ENCODE measurements at regions of chr6 and their contacts with region 1.

Region 1: DNA sequence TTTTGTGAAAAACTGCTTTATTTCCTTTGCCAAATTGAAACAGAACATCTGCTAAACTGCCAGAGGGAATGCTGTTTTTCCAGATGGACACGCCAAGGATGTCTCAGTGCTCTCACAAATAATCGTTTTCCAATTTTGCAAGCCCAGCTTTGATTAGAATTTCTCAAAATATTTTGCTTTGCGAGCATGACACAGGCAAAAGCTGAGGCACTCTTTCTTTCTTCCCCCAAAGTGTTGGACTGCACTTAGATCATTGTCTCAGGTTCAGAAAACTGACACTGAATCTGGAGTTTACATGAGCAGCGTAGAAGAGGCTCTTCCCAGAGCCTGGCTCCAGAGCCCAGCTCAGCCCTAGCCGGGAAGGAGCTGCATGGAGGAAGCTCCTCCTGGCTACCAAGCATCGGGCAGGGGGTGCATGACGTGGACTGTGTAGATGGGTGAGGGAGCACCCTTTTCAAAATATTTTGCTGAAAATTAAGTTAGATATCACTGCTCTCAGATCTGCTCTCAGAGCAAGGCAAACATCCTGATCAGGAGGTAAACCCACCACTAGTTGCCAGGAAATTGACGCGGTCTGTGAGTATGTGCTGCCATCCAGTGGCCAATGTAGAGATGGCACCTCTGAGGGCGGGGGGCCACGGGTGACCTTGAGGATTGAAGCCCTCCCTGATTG is 107.5 kb downstream of the SLC22A3 start:
- DNase-seq: peak; percentile 58 to 72 (median 68)
- H3K4me3 ChIP-seq: no peak overlapping the region
- H3K4me3 Mint-ChIP-seq: no peak overlapping the region
- H3K27ac ChIP-seq: no peak overlapping the region
- H3K27ac Mint-ChIP-seq: no peak overlapping the region
- H3K4me1 ChIP-seq: peaks cover 50% of the 10 kb centered on the region
- H3K4me1 Mint-ChIP-seq: peaks cover 29 to 36% (median 32%) of the 10 kb centered on the region in 4 donors
- H3K27me3 ChIP-seq: no peaks in the 10 kb centered on the region
- H3K27me3 Mint-ChIP-seq: no peaks in the 10 kb centered on the region

Region 2: GRCh38 chr6:159174263-159174969 is 1281.3 kb before region 1 on chr6:
- CTCF ChIA-PET with region 1: interaction called, 3 read pairs
- POLR2A ChIA-PET with region 1: no interaction called
- intact Hi-C with region 1: loop called (anchors 10 kb)
- DNase-seq: peak; percentile 58 to 63 (median 61)
- H3K4me3 ChIP-seq: no peak overlapping the region
- H3K4me3 Mint-ChIP-seq: peak overlapping the region in 5 of 8 donors; percentile 12 to 62 (median 47)
- H3K27ac ChIP-seq: no peak overlapping the region
- H3K27ac Mint-ChIP-seq: peak overlapping the region in 2 of 7 donors; percentile 38 to 67
- H3K4me1 ChIP-seq: peaks cover 11% of the 10 kb centered on the region
- H3K4me1 Mint-ChIP-seq: peaks cover 7 to 17% (median 12%) of the 10 kb centered on the region in 4 donors
- H3K27me3 ChIP-seq: peaks cover 32% of the 10 kb centered on the region
- H3K27me3 Mint-ChIP-seq: peaks cover 31 to 49% of the 10 kb centered on the region in 2 donors

Region 3: DNA sequence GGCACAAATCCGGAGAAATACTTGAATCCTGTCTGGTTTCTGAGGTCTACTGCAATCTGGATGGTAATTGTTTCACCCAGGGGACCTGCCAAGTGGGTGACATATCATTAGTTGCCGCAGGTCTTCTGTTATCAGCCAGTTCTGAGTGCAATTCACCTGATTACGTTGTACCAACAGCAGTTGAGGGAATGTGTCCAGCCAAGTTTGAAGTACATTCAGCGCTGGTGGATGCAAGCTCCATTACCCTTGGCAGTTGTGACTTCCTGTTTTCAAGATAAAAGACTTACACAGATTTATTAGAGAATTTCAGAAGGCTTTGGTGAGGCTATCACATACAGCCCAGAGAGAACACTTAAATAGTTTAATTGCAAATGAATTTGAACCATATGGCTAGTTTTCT is 1243.6 kb before region 1 on chr6:
- CTCF ChIA-PET with region 1: no interaction called
- POLR2A ChIA-PET with region 1: no interaction called
- intact Hi-C with region 1: no loop called
- DNase-seq: no peak
- H3K4me3 ChIP-seq: no peak overlapping the region
- H3K4me3 Mint-ChIP-seq: no peak overlapping the region
- H3K27ac ChIP-seq: no peak overlapping the region
- H3K27ac Mint-ChIP-seq: no peak overlapping the region
- H3K4me1 ChIP-seq: no peaks in the 10 kb centered on the region
- H3K4me1 Mint-ChIP-seq: peaks cover 0 to 2% (median 0%) of the 10 kb centered on the region in 4 donors
- H3K27me3 ChIP-seq: no peaks in the 10 kb centered on the region
- H3K27me3 Mint-ChIP-seq: peaks cover 1 to 11% of the 10 kb centered on the region in 2 donors

Region 4: GRCh38 chr6:160088069-160088783 is 367.5 kb before region 1 on chr6:
- CTCF ChIA-PET with region 1: interaction called, 3 read pairs
- POLR2A ChIA-PET with region 1: no interaction called
- intact Hi-C with region 1: loop called (anchors 5 kb)
- DNase-seq: no peak
- H3K4me3 ChIP-seq: no peak overlapping the region
- H3K4me3 Mint-ChIP-seq: no peak overlapping the region
- H3K27ac ChIP-seq: no peak overlapping the region
- H3K27ac Mint-ChIP-seq: peak overlapping the region in 3 of 7 donors; percentile 43 to 73 (median 65)
- H3K4me1 ChIP-seq: no peaks in the 10 kb centered on the region
- H3K4me1 Mint-ChIP-seq: peaks cover 1 to 9% (median 7%) of the 10 kb centered on the region in 4 donors
- H3K27me3 ChIP-seq: no peaks in the 10 kb centered on the region
- H3K27me3 Mint-ChIP-seq: no peaks in the 10 kb centered on the region

Region 5: DNA sequence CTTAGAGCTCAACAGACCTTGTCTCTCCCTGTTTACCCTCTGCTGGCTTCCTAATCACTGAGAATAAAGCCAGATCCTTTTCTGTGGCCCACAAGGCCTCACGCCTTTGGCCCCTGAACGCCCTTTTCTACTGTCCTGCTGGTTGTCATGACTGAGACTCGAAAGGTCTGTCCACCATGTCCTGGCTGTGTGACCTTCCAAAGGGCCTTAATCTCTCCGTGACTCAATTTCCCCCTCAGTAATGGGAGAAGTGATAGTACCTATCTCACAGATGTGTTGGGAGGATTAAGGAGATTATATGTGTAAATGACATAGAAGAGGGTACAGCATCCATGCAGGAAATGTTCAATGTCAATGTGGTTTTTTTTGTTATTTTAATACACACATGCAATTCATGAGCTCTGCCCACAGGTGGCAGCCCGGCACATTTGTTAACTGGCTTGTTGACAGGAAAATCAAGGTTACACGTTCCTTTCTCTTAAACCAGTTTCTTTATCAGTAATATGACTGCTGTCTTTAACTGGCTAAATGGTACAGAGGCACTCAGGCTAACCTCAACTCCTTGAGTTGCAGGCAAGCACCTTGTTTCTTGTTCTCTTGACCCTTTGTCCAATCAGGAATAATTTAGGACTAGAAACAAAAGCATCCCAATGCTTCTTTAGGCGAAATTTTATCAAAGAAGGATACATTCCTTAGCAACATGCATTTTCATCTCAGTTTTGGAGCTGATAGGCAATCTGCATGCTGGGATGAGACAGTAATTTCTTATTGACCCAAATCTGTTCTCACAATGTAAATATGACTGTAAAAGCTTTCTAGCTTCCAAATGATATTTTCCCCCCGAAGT is 317.5 kb before region 1 on chr6:
- CTCF ChIA-PET with region 1: interaction called, 90 read pairs
- POLR2A ChIA-PET with region 1: interaction called, 4 read pairs
- intact Hi-C with region 1: loop called (anchors 1 kb)
- DNase-seq: peak; percentile 53 to 60 (median 58)
- H3K4me3 ChIP-seq: no peak overlapping the region
- H3K4me3 Mint-ChIP-seq: peak overlapping the region in 1 of 8 donors; percentile 3
- H3K27ac ChIP-seq: no peak overlapping the region
- H3K27ac Mint-ChIP-seq: no peak overlapping the region
- H3K4me1 ChIP-seq: no peaks in the 10 kb centered on the region
- H3K4me1 Mint-ChIP-seq: peaks cover 6 to 11% (median 7%) of the 10 kb centered on the region in 4 donors
- H3K27me3 ChIP-seq: no peaks in the 10 kb centered on the region
- H3K27me3 Mint-ChIP-seq: no peaks in the 10 kb centered on the region

Region 6: GRCh38 chr6:160442151-160442550 is 13.5 kb before region 1 on chr6:
- CTCF ChIA-PET with region 1: interaction called, 10 read pairs
- POLR2A ChIA-PET with region 1: no interaction called
- intact Hi-C with region 1: no loop called
- DNase-seq: no peak
- H3K4me3 ChIP-seq: no peak overlapping the region
- H3K4me3 Mint-ChIP-seq: no peak overlapping the region
- H3K27ac ChIP-seq: no peak overlapping the region
- H3K27ac Mint-ChIP-seq: no peak overlapping the region
- H3K4me1 ChIP-seq: no peaks in the 10 kb centered on the region
- H3K4me1 Mint-ChIP-seq: peaks cover 0 to 2% (median 0%) of the 10 kb centered on the region in 4 donors
- H3K27me3 ChIP-seq: no peaks in the 10 kb centered on the region
- H3K27me3 Mint-ChIP-seq: peaks cover 6 to 13% of the 10 kb centered on the region in 2 donors

Region 7: GRCh38 chr6:160534050-160534696 is 78.5 kb after region 1 on chr6:
- CTCF ChIA-PET with region 1: interaction called, 5 read pairs
- POLR2A ChIA-PET with region 1: no interaction called
- intact Hi-C with region 1: loop called (anchors 1 kb)
- DNase-seq: peak; percentile 41 to 58 (median 45)
- H3K4me3 ChIP-seq: no peak overlapping the region
- H3K4me3 Mint-ChIP-seq: no peak overlapping the region
- H3K27ac ChIP-seq: no peak overlapping the region
- H3K27ac Mint-ChIP-seq: no peak overlapping the region
- H3K4me1 ChIP-seq: peaks cover 8% of the 10 kb centered on the region
- H3K4me1 Mint-ChIP-seq: no peaks in the 10 kb centered on the region
- H3K27me3 ChIP-seq: no peaks in the 10 kb centered on the region
- H3K27me3 Mint-ChIP-seq: peaks cover 0 to 2% of the 10 kb centered on the region in 2 donors

Measured in CD4-positive, alpha-beta memory T cell (primary cell).